ENCODE measurements at regions of chr10 and their contacts with region 1.

Region 1: DNA sequence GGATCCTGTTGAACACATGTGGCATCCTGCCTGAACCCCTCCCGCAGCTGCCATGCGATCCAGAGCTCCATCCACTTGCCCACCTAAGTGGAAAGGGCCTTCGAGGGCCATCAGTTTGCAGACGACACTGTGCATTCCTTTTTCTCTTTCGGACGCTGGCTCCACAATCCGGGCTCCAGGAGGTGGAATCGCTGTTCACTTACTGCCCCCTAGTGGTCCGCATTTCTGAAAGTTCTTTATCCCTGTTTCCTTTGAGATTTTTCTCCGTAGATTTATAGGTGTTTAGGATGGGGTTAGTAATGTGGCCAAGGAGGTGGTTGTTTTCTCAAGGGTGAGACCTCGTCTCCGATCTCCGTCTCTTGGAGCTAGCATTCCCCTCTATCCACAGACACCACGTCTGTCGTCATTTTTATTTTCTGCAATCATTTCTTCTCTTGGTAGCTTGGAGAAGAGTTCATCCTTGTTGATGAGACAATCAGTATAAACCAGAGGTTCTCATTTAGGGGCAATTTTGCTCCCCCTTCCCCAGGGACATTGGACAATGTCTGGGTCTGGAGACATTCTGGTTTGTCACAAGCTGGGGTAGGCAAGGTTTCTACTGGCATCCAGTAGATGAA is 204.6 kb downstream of the ARHGAP21 start:
- DNase-seq: no peak
- H3K4me3 ChIP-seq: no peak overlapping the region
- CTCF ChIP-seq: peak; percentile 70

Region 2: GRCh38 chr10:24374134-24374915 is 144.8 kb before region 1 on chr10:
- CTCF ChIA-PET with region 1: interaction called, 74 read pairs
- POLR2A ChIA-PET with region 1: no interaction called
- DNase-seq: peak; percentile 71
- H3K4me3 ChIP-seq: no peak overlapping the region
- CTCF ChIP-seq: no peak

Region 3: DNA sequence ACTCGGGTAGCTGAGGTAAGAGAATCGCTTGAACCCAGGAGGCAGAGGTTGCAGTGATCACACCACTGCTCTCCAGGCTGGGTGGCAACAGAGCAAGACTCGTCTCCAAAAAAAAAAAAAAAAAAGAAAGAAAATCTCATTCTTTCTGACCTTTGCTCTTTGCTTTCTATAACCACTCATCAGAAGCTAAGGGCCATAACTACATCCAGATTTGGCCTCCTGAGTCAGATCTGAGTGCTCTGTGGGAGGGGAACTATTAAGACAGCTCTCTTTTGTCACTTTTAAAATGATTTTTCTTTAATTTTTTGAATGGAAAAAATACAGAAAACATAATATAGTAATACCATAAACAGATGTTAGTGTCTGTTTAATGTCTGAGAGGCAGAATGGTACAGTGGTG is 100.0 kb before region 1 on chr10:
- CTCF ChIA-PET with region 1: interaction called, 18 read pairs
- POLR2A ChIA-PET with region 1: no interaction called
- DNase-seq: no peak
- H3K4me3 ChIP-seq: no peak overlapping the region
- CTCF ChIP-seq: no peak

Region 4: GRCh38 chr10:24503461-24504320 is 15.4 kb before region 1 on chr10:
- CTCF ChIA-PET with region 1: interaction called, 138 read pairs
- POLR2A ChIA-PET with region 1: no interaction called
- DNase-seq: no peak
- H3K4me3 ChIP-seq: no peak overlapping the region
- CTCF ChIP-seq: peak; percentile 49